Cardiac septum (tissue), 1 donor: ENCODE measurements at regions of chr2 and their contacts with region 1.

Region 1: GRCh38 chr2:132615329-132616085 is 54.5 kb downstream of the LYPD1 start:
- DNase-seq: no peak

Region 2: DNA sequence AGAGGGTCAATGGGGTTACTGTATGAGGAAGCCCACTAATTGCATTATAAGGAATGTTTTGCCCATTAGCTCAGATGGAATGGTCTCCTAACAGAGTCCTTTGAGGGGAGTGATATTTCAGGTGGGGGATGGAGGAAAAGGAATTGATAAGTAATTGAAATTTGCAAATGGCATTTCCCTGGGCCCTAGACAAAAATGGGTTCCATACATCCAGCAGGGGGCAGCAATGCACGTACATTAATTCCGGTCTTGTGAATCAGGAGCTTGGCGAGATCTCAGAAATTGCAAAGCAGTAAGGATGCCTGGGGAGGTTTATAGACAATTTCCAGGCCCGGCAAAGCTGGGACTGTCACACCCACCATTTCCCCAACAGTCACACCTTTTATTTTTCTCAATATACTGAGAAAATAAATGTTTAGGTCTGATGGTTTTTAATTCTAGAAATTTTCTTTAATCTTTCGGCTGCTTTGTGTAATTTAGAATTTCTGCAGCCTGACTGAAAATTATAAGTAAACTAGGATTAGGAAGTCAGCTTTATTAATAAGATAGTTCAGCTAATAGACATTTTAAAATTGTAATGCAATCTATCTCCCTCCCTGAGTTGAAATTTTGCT is 68.3 kb before region 1 on chr2:
- intact Hi-C with region 1: no loop called
- DNase-seq: no peak

Region 3: GRCh38 chr2:132632000-132632649 is 16.6 kb after region 1 on chr2:
- intact Hi-C with region 1: loop called (anchors 1 kb)
- DNase-seq: no peak

Region 4: DNA sequence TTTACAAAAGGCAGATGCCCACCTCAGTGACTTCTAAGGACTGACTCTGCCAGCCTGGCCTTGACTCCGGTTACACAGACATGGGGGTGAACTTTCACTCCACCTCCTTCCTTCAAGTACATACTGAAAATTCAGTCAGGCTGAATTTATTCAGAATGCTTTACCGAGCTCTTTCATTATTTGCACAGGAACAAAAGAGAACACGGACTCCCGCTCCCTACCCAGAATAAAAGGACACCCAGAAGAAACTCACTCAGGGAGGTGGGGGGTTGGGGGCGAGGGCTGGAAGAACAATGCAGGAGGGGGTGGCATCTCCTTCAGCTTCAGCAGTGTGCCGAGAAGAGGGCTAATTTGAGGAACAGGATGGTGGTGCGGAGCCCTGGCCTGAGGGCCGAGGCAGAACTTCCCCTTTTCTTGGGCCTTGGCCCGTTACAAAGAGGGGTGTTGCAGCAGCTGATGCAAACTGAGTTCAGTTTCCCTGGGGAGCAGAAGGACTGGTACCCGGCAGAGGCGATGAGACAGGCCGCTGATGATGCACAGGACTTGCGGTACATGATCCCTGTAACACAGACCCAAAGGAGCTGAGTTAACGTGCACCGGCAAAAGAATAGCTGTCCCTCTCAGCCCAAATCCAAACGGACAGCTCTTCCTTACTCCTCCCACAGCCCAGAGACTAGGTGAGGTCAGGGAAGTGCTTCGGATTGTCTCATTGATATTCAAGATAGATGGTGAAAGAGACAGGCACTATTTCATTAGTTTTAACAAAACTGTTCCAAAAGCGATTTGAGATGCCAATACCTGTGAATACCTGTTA is 30.4 kb after region 1 on chr2:
- intact Hi-C with region 1: no loop called
- DNase-seq: no peak